ENCODE measurements at regions of chr3 and their contacts with region 1.

Region 1: GRCh38 chr3:136297826-136298225 is 47.7 kb downstream of the PCCB start:
- DNase-seq: no peak
- ATAC-seq: no peak

Region 2: GRCh38 chr3:136326316-136326715 is 28.5 kb after region 1 on chr3:
- intact Hi-C with region 1: loop called (anchors 2 kb)
- DNase-seq: no peak
- ATAC-seq: no peak

Measured in sciatic nerve (tissue), 2 donors.